Activated T-helper 1 cell treated with anti-CD3 and anti-CD28 coated beads, Interleukin-12 subunit alpha, Interleukin-12 subunit beta, Interleukin-2, Interleukin-4 antibody, amounts not matched to agents 30 ng/mL and 10 ng/mL and 1 ng/mL, durations not matched to agents 14 hours and 24 hours and 36 hours (primary cell): ENCODE measurements at regions of chr7 and their contacts with region 1.

Region 1: GRCh38 chr7:100208911-100209408 is 10.8 kb upstream of the PVRIG start:
- DNase-seq: peak; percentile 48
- H3K4me3 Mint-ChIP-seq: peak overlapping the region; percentile 71
- H3K27ac Mint-ChIP-seq: peak overlapping the region; percentile 80
- H3K4me1 Mint-ChIP-seq: peaks cover 49% of the 10 kb centered on the region
- H3K27me3 Mint-ChIP-seq: no peaks in the 10 kb centered on the region

Region 2: DNA sequence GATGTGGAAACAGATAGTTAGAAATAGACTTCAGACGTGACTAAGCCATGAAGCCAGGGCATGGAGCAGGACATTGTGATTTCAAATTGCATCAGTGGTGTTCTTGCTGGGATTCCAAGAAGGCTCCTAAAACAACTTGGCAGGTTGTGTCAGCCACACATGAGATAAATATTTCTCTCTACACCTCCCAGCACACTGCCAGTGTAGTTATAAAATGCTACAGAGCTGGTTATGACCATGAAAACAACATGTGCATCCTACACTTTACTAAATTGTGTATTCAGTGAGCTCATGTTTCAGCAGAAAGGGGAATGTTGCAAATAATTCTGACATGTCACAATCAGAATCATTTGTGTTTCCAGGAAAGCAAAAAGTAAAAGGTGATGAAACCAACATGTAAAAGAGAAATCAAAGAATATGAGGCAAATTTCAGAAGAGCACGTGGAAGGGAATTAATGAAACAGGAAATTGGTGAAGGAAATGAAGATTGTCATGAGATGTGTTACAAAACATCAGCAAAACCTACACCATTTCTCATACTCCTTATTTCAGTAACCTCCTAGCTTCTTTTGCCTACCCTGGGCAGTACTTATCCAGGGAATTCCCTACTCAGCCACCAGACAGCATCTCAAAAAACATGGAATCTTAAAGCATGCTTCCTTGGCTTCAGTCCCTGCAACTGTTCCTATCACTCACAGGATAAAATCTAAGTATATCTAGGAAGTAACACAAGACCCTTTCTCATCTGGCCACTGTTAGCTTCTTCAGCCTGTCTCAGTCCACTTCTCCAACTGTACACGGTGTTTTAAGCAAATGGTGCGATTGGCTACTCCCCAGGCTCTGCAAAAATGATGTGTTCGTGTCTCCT is 468.2 kb before region 1 on chr7:
- intact Hi-C with region 1: no loop called
- DNase-seq: no peak
- H3K4me3 Mint-ChIP-seq: no peak overlapping the region
- H3K27ac Mint-ChIP-seq: no peak overlapping the region
- H3K4me1 Mint-ChIP-seq: no peaks in the 10 kb centered on the region
- H3K27me3 Mint-ChIP-seq: no peaks in the 10 kb centered on the region

Region 3: GRCh38 chr7:100167921-100168323 is 41.0 kb before region 1 on chr7:
- intact Hi-C with region 1: loop called (anchors 5 kb)
- DNase-seq: no peak
- H3K4me3 Mint-ChIP-seq: peak overlapping the region; percentile 78
- H3K27ac Mint-ChIP-seq: peak overlapping the region; percentile 38
- H3K4me1 Mint-ChIP-seq: peaks cover 71% of the 10 kb centered on the region
- H3K27me3 Mint-ChIP-seq: peaks cover 24% of the 10 kb centered on the region

Region 4: DNA sequence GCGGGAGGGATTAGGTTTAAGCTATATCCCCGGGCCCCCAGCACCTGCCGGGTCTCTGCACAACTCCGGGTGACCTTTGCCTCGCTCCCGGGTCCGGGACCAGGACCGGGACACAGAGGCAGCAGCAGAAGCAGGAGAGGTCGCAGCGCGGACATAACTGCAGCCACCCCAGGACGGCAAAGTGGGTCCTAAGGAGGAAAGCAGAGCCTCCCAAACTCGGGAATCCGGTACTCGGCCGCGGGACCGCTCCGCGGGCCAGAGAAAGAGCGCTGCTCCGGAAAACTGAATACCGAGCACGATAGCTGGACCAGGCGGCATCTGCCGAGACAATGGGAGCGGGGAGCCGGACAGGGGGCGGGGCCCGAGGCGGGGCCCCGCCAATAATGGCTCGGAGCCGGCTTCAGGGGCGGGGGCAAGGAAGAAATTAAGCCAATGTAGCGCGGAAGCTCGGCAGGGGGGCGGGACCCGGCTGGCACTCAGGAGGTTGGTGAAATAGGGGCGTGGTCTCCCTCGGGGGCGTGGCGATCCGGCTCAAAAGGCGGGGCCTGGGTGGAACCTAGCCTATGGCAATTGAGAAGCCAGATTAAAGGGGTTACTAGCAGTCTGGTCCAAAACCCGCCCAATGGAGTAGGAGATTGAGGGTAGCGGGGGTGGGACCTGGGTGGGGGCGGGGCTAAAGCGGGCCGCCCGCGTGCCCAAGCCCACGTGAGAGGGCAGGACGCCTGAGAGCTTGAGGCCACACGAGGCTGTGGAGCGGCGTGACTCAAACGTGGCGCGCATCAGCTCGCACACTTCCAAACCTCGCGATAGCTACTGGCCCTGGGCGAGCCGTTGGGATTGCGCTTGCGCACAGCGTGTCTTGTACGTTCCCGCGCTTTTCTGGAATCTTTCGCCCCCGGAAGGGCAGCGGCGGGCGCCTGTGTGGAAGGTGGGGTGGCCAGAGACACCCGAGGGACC is 31.6 kb before region 1 on chr7 and contains the starts of genes GPC2 and STAG3:
- intact Hi-C with region 1: loop called (anchors 1 kb)
- DNase-seq: peak; percentile 97
- H3K4me3 Mint-ChIP-seq: peak within 1 kb of the TSS; percentile 82
- H3K27ac Mint-ChIP-seq: peak within 1 kb of the TSS; percentile 83
- H3K4me1 Mint-ChIP-seq: peaks cover 46% of the 10 kb centered on the region
- H3K27me3 Mint-ChIP-seq: peaks cover 15% of the 10 kb centered on the region
- total RNA-seq, gene GPC2: 3.9 and 4.8 TPM in 2 replicates
- total RNA-seq, gene STAG3: 25.0 and 30.6 TPM in 2 replicates

Region 5: DNA sequence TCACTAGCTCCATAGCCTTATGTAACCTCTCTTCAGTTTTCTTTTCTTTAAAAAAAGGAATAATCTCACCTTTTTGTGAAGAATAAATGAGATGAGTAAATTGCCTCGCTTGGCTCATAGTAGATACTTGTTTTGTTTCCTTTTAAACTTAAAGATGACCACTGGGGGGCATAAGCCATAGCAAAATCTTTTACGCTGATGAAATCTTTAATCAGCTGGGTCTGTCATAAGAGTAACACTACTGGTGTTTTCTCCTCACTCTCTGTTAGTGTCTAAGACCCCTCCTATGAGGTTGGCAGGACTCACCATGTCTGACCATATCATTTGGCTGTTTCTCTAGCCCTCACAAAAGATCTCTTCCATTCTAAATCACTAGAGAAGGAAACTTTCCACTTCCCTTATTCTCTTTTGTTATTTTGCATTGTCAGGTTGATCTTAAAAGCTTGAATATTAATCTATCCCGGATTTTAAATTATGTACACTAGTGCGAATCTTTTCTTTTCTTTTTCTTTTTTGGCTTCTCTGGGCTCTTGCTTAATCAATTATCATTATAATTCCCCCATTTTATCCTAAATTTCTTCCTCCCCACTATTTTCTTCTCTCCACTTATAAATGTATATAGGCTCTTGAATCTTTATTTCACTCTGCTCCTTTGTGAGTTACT is 18.8 kb before region 1 on chr7:
- intact Hi-C with region 1: loop called (anchors 2 kb)
- DNase-seq: no peak
- H3K4me3 Mint-ChIP-seq: no peak overlapping the region
- H3K27ac Mint-ChIP-seq: peak overlapping the region; percentile 8
- H3K4me1 Mint-ChIP-seq: peaks cover 29% of the 10 kb centered on the region
- H3K27me3 Mint-ChIP-seq: no peaks in the 10 kb centered on the region

Region 6: GRCh38 chr7:100493476-100494264 is 284.7 kb after region 1 on chr7:
- intact Hi-C with region 1: no loop called
- DNase-seq: peak; percentile 41
- H3K4me3 Mint-ChIP-seq: peak overlapping the region; percentile 61
- H3K27ac Mint-ChIP-seq: no peak overlapping the region
- H3K4me1 Mint-ChIP-seq: peaks cover 8% of the 10 kb centered on the region
- H3K27me3 Mint-ChIP-seq: peaks cover 18% of the 10 kb centered on the region

Region 7: GRCh38 chr7:100753750-100754149 is 544.8 kb after region 1 on chr7:
- intact Hi-C with region 1: no loop called
- DNase-seq: no peak
- H3K4me3 Mint-ChIP-seq: no peak overlapping the region
- H3K27ac Mint-ChIP-seq: no peak overlapping the region
- H3K4me1 Mint-ChIP-seq: no peaks in the 10 kb centered on the region
- H3K27me3 Mint-ChIP-seq: peaks cover 18% of the 10 kb centered on the region